Activated B cell treated with CpG ODN at 0.5 μM for 24 hours (primary cell): ENCODE measurements at regions of chr19 and their contacts with region 1.

Region 1: DNA sequence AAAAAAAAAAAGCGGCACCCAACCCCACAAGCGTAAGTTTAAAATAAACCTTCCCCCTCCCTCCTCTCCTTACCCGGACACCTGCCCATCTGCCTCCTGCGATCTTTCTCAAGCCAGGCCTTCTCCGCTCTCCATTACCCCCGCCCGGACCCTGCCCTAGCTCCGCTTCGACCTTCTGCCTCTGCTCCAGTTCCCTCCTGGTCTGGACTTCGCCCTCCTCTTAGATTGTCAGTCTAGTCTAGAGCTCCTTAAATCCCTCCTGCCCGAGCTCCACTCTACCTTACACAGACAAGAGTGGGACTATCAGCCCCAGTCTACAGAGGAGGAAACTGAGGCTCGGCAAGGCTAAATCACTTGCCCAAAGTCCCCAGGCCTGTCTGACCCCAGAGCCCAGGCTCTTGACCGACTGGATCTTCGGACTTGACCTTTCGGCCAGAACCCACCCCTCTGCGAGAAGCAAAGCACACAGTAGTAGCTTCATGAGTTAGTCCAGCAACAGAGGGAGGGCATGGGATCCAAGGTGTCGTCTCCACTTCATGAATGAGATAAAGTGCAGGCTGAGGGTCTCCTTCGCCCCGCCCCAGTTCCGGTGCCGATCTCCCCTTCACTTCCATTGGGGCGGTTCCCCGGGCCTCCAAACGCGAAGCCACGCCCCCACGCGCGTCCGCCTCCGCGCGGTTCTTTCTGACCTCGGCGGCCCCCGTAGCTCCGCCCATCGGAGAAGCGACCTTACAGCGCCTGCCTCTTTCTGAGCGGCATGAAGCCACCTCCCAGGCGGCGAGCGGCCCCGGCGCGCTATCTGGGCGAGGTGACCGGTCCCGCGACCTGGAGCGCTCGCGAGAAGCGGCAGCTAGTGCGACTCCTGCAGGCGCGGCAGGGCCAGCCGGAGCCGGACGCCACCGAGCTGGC is at the start of gene SNAPC2:
- DNase-seq: peak; percentile 97
- ATAC-seq: peak; percentile 63
- H3K4me3 Mint-ChIP-seq: peak within 1 kb of the TSS; percentile 93
- H3K27ac Mint-ChIP-seq: peak within 1 kb of the TSS; percentile 96
- H3K4me1 Mint-ChIP-seq: peaks cover 49% of the 10 kb centered on the region
- H3K27me3 Mint-ChIP-seq: peaks cover 17% of the 10 kb centered on the region
- CTCF ChIP-seq: no peak
- total RNA-seq, gene SNAPC2: 14.4 and 15.3 TPM in 2 replicates

Region 2: DNA sequence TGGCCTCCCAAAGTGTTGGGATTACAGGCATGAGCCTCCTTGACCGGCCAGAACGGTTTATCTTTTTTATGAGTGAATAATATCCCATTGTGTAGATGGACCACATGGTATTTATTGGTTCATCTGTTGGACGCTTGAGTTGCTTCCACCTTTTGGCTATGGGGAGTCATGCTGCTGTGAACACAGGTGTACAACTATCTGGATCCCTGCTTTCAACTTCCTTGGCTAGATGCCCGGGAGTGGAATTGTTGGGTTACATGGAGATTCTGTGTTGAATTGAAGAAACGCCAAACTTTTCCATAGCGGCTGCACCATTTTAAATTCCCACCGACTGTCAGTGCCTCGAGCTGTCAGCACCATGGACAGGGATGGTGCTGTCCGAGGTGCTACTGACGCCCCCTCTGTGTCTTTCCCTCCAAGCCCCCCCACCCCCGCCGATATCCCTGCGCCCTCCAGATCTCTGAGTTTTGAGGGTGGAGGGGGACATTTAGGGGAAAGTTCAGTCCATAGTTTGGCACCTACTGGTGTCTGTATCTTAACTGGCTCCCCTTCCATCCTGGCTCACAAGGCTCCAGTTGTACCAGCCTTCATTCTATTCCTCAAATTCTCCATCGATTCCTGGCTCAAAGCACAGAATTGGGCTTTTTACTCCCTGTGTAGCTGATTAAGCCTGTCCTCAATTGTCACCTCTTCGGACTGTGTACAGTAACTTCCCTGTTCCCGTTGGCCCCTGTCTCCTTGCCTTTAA is 357.0 kb before region 1 on chr19:
- CTCF ChIA-PET with region 1: interaction called, 13 read pairs
- POLR2A ChIA-PET with region 1: interaction called, 7 read pairs
- intact Hi-C with region 1: no loop called
- DNase-seq: no peak
- ATAC-seq: no peak
- H3K4me3 Mint-ChIP-seq: no peak overlapping the region
- H3K27ac Mint-ChIP-seq: no peak overlapping the region
- H3K4me1 Mint-ChIP-seq: no peaks in the 10 kb centered on the region
- H3K27me3 Mint-ChIP-seq: no peaks in the 10 kb centered on the region
- CTCF ChIP-seq: no peak

Region 3: DNA sequence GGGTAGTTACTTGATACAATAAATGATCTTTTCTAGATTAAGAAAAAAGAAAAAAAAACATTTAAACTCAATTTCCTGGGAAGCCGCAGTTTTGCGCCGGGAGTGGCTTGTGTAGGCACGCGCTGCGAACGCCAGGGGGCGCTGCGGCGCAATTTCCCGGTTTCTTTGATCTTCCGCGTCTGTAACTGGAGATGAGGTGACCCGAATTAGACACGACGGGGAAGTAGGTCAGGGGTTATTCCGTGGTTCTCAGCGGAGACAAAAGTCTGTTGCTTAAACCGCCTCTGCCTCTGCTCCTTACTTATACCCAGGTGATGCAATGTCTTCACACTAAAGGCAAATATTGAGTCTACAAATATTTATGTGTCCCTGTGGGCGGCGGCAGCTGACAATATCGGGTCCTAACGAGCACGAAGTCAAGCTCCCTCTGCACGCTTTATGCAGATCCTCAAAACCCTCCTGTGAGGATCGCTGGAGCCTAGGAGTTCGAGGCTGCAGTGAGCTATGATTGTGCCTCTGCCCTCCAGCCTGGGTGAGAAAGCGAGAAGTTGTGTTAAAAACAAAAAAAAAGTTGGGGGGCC is 267.7 kb before region 1 on chr19:
- CTCF ChIA-PET with region 1: no interaction called
- POLR2A ChIA-PET with region 1: interaction called, 6 read pairs
- intact Hi-C with region 1: loop called (anchors 10 kb)
- DNase-seq: peak; percentile 82
- ATAC-seq: peak; percentile 87
- H3K4me3 Mint-ChIP-seq: peak overlapping the region; percentile 78
- H3K27ac Mint-ChIP-seq: peak overlapping the region; percentile 41
- H3K4me1 Mint-ChIP-seq: peaks cover 8% of the 10 kb centered on the region
- H3K27me3 Mint-ChIP-seq: no peaks in the 10 kb centered on the region
- CTCF ChIP-seq: peak; percentile 81

Region 4: DNA sequence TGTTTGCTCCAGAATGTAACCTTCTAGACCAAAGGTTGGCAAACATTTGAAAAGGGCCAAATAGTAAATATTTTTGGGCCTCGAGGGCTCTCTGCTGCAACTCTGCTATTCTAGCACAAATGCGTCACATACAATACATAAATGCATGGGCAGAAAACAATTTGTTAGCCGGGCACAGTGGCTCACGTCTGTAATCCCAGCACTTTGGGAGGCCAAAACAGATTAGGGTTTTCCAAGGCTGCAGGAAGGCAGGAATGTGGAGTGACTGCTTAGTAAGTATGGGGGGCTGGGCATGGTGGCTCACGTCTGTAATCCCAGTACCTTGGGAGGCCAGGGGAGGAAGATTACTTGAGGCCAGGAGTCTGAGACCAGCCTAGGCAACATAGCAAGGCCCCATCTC is 111.7 kb before region 1 on chr19:
- CTCF ChIA-PET with region 1: no interaction called
- POLR2A ChIA-PET with region 1: no interaction called
- intact Hi-C with region 1: no loop called
- DNase-seq: no peak
- ATAC-seq: no peak
- H3K4me3 Mint-ChIP-seq: no peak overlapping the region
- H3K27ac Mint-ChIP-seq: peak overlapping the region; percentile 51
- H3K4me1 Mint-ChIP-seq: peaks cover 19% of the 10 kb centered on the region
- H3K27me3 Mint-ChIP-seq: peaks cover 5% of the 10 kb centered on the region
- CTCF ChIP-seq: no peak

Region 5: GRCh38 chr19:7860532-7861342 is 59.1 kb before region 1 on chr19:
- CTCF ChIA-PET with region 1: no interaction called
- POLR2A ChIA-PET with region 1: interaction called, 14 read pairs
- intact Hi-C with region 1: no loop called
- DNase-seq: no peak
- ATAC-seq: no peak
- H3K4me3 Mint-ChIP-seq: no peak overlapping the region
- H3K27ac Mint-ChIP-seq: no peak overlapping the region
- H3K4me1 Mint-ChIP-seq: peaks cover 21% of the 10 kb centered on the region
- H3K27me3 Mint-ChIP-seq: peaks cover 22% of the 10 kb centered on the region
- CTCF ChIP-seq: no peak

Region 6: DNA sequence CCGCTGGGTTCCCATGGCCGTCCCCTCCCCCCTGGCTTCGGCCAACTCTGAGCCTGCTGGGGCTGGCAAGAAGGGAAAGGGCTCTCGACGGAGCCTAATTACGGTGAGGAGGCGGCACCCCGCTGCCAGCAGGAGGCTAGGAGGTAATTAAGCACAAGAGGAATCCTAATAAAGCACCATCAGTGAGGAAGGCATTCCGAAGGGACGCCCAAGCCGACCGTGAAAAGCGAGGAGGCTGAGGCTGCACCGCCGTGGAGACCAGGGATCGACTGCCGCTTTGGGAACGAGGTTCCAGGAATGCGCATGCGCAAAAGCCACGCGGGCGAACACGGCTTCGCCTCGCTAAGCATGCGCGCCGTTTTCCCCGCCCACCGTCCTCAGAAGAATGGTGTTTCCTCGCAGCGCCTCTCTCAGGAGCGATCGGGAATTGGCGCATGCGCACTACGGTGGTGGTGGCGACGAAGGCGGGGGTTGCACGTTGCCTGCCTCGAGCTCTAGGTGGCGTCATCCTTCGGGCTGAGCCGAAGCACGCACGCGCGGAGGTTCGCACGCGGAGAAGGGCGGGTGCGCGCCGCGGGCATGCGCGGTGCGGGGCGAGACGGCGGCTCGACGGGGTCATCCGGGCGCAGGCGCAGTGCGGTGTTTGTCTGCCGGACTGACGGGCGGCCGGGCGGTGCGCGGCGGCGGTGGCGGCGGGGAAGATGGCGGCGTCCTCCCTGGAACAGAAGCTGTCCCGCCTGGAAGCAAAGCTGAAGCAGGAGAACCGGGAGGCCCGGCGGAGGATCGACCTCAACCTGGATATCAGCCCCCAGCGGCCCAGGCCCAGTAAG is 16.4 kb before region 1 on chr19 and contains the start of gene MAP2K7:
- CTCF ChIA-PET with region 1: interaction called, 4 read pairs
- POLR2A ChIA-PET with region 1: interaction called, 30 read pairs
- intact Hi-C with region 1: loop called (anchors 1 kb)
- DNase-seq: peak; percentile 99
- ATAC-seq: peak; percentile 91
- H3K4me3 Mint-ChIP-seq: peak within 1 kb of the TSS; percentile 89
- H3K27ac Mint-ChIP-seq: peak within 1 kb of the TSS; percentile 91
- H3K4me1 Mint-ChIP-seq: peaks cover 33% of the 10 kb centered on the region
- H3K27me3 Mint-ChIP-seq: no peaks in the 10 kb centered on the region
- CTCF ChIP-seq: no peak
- total RNA-seq, gene MAP2K7: 46.3 and 52.8 TPM in 2 replicates

Region 7: DNA sequence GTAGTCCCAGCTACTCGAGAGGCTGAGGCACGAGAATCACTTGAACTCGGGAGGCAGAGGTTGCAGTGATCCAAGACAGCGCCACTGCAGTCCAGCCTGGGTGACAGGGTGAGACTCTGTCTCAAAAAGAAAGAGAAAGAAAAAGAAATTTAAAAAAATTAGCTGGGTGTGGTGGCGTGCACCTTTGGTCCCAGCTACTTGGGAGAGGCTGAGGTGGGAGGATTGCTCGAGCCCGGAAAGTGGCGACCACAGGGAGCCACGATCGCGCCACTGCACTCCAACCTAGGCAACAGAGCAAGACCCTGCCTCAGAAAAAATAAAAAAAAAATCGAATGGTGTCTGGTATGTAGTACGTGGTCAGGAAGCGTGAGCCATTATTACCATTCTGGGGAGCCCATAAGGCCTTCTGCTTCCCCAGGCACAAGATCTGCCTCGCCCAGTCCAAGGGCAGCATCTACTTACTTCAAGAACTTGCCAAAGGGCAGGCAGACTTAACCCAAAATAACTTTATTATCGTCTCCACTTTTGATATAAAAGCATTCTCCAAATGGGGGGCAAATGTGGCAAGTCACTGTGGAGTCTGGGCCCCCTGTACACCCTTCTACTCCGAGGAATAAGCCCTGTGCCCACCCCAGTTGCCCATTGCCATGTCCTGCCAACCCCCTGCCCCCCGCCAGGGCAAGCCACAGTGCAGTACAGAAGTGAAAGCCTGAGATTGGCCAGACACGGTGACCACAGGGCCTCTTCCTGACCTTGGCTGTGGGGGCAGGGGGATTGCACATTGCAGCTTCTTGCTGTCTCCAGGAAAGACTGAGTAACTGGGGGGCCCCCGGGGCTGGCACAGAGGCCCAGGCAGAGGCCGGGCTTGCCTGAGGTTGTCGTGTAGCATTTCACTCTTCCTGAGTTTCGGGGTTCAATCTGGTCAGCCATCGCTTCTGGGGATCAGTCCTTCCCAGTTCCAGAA is 145.3 kb after region 1 on chr19:
- CTCF ChIA-PET with region 1: no interaction called
- POLR2A ChIA-PET with region 1: no interaction called
- intact Hi-C with region 1: no loop called
- DNase-seq: no peak
- ATAC-seq: no peak
- H3K4me3 Mint-ChIP-seq: no peak overlapping the region
- H3K27ac Mint-ChIP-seq: no peak overlapping the region
- H3K4me1 Mint-ChIP-seq: no peaks in the 10 kb centered on the region
- H3K27me3 Mint-ChIP-seq: peaks cover 1% of the 10 kb centered on the region
- CTCF ChIP-seq: no peak